Transverse colon (tissue), 4 donors: ENCODE measurements at regions of chr3 and their contacts with region 1.

Region 1: GRCh38 chr3:22122567-22122966 is 371.6 kb upstream of the ZNF385D start:
- DNase-seq: no peak
- H3K4me3 ChIP-seq: no peak overlapping the region
- H3K27ac ChIP-seq: no peak overlapping the region
- H3K4me1 ChIP-seq: no peaks in the 10 kb centered on the region
- H3K27me3 ChIP-seq: no peaks in the 10 kb centered on the region
- CTCF ChIP-seq: no peak
- EP300 ChIP-seq: no peak
- POLR2A ChIP-seq: no peak

Region 2: GRCh38 chr3:20975188-20975651 is 1147.3 kb before region 1 on chr3:
- in situ Hi-C with region 1: no loop called
- intact Hi-C with region 1: no loop called
- DNase-seq: no peak
- H3K4me3 ChIP-seq: no peak overlapping the region
- H3K27ac ChIP-seq: no peak overlapping the region
- H3K4me1 ChIP-seq: no peaks in the 10 kb centered on the region
- H3K27me3 ChIP-seq: no peaks in the 10 kb centered on the region
- CTCF ChIP-seq: no peak
- EP300 ChIP-seq: no peak
- POLR2A ChIP-seq: no peak

Region 3: GRCh38 chr3:22101811-22102210 is 20.8 kb before region 1 on chr3:
- in situ Hi-C with region 1: no loop called
- intact Hi-C with region 1: loop called (anchors 1 kb)
- DNase-seq: no peak
- H3K4me3 ChIP-seq: no peak overlapping the region
- H3K27ac ChIP-seq: no peak overlapping the region
- H3K4me1 ChIP-seq: no peaks in the 10 kb centered on the region
- H3K27me3 ChIP-seq: no peaks in the 10 kb centered on the region
- CTCF ChIP-seq: no peak
- EP300 ChIP-seq: no peak
- POLR2A ChIP-seq: no peak

Region 4: DNA sequence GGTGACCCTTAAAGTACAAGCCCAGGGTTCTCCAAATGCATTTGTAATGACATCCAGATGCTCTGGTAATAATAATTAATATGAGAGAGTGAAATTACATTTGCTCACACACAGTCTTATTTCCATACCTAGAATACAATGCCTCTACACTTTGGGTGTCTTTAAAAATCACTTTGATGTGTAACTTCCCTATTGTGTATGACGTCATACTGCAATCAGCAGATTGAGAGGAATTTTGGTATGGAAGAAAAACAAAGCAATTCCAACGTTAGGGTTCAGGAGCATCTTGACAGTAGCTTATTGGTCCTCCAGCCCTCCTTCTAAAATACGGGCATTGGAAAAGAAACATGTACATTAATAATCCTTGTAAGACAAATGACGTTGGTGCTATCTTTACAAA is 299.0 kb after region 1 on chr3:
- in situ Hi-C with region 1: no loop called
- intact Hi-C with region 1: no loop called
- DNase-seq: no peak
- H3K4me3 ChIP-seq: no peak overlapping the region
- H3K27ac ChIP-seq: no peak overlapping the region
- H3K4me1 ChIP-seq: no peaks in the 10 kb centered on the region
- H3K27me3 ChIP-seq: no peaks in the 10 kb centered on the region
- CTCF ChIP-seq: no peak
- EP300 ChIP-seq: no peak
- POLR2A ChIP-seq: no peak